MCF 10A (cell line): ENCODE measurements at regions of chr6 and their contacts with region 1.

Region 1: GRCh38 chr6:99746261-99746895 is 139.7 kb downstream of the PRDM13 start:
- DNase-seq: peak; percentile 73
- H3K4me3 Mint-ChIP-seq: no peak overlapping the region
- H3K27ac Mint-ChIP-seq: no peak overlapping the region
- H3K4me1 Mint-ChIP-seq: no peaks in the 10 kb centered on the region
- H3K27me3 Mint-ChIP-seq: peaks cover 75% of the 10 kb centered on the region
- CTCF ChIP-seq: peak; percentile 80

Region 2: DNA sequence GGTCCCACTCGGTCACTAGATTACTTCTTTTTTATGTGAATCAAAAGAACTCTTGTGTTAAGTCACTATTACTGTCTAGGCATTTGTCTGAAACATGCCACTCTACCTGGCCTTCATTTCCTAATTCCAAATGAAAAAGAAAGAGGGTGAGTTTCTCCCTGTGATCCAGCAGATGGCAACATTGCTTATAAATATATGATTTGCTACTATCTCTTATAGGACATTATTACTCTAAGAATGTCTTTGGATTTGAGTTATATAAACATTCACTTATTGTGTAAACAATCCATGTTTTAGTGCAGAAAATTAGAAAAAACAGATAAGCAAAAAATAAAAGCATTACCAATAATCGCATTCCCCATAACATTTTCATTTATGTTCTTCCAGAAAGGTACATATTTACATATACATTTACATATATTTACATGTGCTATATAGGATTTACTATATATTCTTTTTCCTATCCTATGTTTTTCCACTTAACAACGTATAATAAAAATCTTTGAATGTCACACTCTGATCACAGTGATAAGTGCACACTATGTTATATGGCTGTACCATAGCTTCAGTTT is 463.8 kb before region 1 on chr6:
- CTCF ChIA-PET with region 1: interaction called, 3 read pairs
- POLR2A ChIA-PET with region 1: no interaction called
- intact Hi-C with region 1: loop called (anchors 5 kb)
- DNase-seq: peak; percentile 28
- H3K4me3 Mint-ChIP-seq: no peak overlapping the region
- H3K27ac Mint-ChIP-seq: no peak overlapping the region
- H3K4me1 Mint-ChIP-seq: no peaks in the 10 kb centered on the region
- H3K27me3 Mint-ChIP-seq: no peaks in the 10 kb centered on the region
- CTCF ChIP-seq: peak; percentile 33

Region 3: DNA sequence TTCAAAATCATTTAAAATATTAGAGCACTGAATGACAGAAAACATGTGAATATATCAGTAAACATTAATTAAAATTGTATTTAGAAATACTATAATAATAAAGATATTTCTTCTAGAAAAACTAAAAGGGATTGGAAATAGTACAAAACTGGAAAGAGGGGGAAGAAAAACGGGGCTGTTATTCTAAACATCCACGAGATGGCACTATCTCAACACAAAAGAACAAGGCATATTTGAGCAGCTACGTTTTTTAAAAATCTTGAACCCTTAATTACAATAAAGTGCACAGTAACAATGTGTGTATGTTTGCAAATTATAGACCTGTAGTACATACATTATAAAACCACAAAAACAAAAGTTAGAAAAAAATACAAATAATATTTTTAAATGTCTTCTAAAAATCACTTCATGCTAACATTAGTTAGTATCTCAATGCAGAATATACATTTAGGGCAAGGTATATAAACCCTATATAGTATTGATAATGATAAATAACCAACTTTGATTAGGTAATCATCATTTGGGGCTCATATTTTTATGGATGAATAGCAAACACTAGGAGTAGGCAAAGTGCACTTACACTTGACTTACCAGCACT is 278.8 kb before region 1 on chr6:
- CTCF ChIA-PET with region 1: interaction called, 23 read pairs
- POLR2A ChIA-PET with region 1: interaction called, 4 read pairs
- intact Hi-C with region 1: loop called (anchors 1 kb)
- DNase-seq: peak; percentile 41
- H3K4me3 Mint-ChIP-seq: no peak overlapping the region
- H3K27ac Mint-ChIP-seq: no peak overlapping the region
- H3K4me1 Mint-ChIP-seq: peaks cover 5% of the 10 kb centered on the region
- H3K27me3 Mint-ChIP-seq: no peaks in the 10 kb centered on the region
- CTCF ChIP-seq: peak; percentile 70

Region 4: DNA sequence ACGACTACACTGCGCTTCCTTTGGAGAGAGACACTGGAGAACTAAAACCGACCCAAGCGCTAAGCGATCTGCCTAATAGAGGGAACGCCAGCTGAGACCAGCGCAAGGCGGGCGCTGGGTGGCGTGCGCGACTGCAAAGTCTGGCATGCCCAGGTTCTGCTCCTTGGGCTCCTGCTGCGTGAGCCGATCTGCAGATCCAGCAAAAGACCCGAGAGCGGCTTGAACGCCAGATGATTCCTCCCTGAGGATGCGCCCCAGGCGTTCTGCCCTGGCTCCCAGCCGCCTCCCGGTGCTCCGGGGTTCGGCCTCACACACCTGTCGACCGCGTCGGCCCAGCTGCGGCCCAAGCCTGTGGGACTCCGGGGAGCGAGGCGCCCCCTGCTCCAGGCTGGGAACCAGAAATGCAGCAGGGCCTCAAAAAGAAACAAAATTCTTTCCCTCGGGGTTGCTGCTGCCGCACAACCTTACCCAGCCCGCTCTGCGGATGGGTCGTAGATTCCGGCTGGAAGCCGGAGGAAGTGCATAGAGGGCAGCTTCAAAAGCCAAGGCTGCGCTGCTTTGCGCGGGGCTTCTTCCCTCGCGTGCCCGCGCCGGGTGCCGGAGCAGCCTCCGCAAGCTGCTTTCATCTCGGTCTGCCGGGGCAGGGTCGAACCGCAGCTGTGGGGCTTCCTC is 157.6 kb before region 1 on chr6:
- CTCF ChIA-PET with region 1: interaction called, 32 read pairs
- POLR2A ChIA-PET with region 1: no interaction called
- intact Hi-C with region 1: loop called (anchors 1 kb)
- DNase-seq: peak; percentile 58
- H3K4me3 Mint-ChIP-seq: peak overlapping the region; percentile 73
- H3K27ac Mint-ChIP-seq: no peak overlapping the region
- H3K4me1 Mint-ChIP-seq: peaks cover 5% of the 10 kb centered on the region
- H3K27me3 Mint-ChIP-seq: peaks cover 68% of the 10 kb centered on the region
- CTCF ChIP-seq: peak; percentile 31

Region 5: DNA sequence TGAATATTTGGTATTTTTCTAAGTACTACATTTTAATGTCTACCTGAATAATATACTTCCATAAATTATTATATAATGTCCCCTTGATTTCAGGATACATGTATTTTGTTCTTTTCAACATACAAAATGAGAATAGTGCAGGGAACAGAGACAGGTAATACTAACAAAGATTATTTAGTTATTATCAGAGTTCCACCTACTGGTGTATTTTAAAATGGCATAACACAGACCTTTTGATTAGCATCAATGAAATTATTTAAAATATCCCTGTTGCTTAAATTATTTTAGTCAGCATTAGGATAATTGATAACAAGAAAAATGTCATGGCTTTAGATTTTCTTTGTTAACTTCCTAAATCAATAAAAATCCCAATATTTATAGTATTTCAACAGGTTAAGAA is 44.3 kb after region 1 on chr6:
- CTCF ChIA-PET with region 1: interaction called, 10 read pairs
- POLR2A ChIA-PET with region 1: no interaction called
- intact Hi-C with region 1: no loop called
- DNase-seq: peak; percentile 10
- H3K4me3 Mint-ChIP-seq: no peak overlapping the region
- H3K27ac Mint-ChIP-seq: no peak overlapping the region
- H3K4me1 Mint-ChIP-seq: peaks cover 6% of the 10 kb centered on the region
- H3K27me3 Mint-ChIP-seq: peaks cover 37% of the 10 kb centered on the region
- CTCF ChIP-seq: peak; percentile 36